ENCODE measurements at regions of chr19 and their contacts with region 1.

Region 1: DNA sequence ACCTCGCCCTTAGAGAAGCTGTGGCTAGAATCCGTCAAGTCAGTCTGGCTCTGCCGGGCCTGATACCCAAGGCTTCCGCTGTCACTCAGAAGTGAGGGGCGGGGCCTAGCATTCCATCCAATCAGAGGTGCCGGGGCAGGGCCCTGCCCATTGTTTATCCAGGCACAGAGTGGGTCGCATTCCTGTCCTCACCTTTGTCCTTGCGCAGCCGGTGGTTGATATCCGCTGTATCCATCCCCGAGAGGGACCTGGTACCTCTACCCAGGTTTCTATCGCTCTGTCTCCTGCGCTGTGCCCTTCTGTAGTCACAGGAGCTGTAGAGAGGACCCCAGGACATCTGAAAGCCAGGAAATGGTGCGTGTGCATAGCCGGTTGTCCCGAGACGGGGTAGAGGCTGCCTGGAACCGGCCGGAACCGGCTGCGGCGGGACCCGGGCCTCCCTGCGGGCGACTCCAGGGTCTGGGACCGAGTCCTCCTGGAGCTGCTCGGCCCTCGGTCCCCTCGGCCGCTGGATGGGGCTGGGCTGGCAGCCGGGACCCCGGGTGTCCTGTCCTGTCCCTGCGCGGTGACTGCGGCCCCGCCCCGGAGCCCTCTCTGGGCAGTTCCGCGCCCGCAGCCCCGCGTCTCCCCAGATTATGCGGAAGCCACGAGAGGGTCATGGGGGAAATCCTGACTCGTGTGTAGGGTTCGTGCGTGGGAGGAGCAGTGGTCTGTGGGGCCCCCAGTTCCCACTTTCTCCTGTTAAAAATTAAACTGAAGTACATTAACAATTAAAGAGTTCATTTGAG is at the start of gene ZNF763:
- DNase-seq: peak; percentile 70 to 86 (median 83)
- ATAC-seq: peak; percentile 95
- H3K4me3 ChIP-seq: peak within 1 kb of the TSS; percentile 90
- H3K4me3 Mint-ChIP-seq: peak within 1 kb of the TSS; percentile 87 to 99 (median 94)
- H3K27ac ChIP-seq: peak within 1 kb of the TSS; percentile 88
- H3K27ac Mint-ChIP-seq: peak within 1 kb of the TSS; percentile 89 to 97 (median 94)
- H3K4me1 ChIP-seq: peaks cover 8 to 10% of the 10 kb centered on the region in 2 donors
- H3K4me1 Mint-ChIP-seq: peaks cover 21 to 34% (median 27%) of the 10 kb centered on the region in 7 donors
- H3K27me3 ChIP-seq: no peaks in the 10 kb centered on the region
- H3K27me3 Mint-ChIP-seq: no peaks in the 10 kb centered on the region
- total RNA-seq, gene ZNF763: 1.3 to 17.3 (median 4.4) TPM

Region 2: DNA sequence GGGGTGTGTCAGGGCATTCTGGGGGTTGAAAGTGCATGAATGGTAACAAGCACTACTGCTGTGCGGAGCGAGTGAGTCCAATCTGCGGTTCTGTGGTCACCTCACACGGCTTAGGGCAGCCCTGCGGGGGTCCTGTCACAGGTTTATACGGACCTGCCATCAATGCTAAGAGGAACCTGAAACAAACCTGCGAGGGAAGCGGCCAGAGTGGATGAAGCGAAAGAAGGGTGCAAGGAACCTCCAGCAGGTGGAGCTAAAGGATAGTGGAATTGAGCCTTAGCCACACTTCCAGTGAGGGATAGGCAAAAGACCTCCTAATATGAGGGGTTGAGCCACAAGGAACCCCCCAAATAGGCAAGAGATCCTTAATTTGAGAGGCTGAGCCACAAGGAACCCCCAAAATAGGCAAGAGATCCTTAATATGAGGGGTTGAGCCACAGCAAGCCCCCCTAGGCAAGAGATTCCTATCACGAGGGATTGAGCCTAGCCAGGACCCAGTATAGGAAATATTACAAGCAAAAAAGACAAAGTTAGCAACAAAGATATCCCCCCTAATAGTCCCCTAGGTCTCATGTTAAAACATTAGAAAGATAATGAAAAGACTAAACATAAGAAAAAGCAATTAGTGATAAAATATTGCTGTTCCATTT is 83.8 kb before region 1 on chr19:
- CTCF ChIA-PET with region 1: interaction called, 4 read pairs
- POLR2A ChIA-PET with region 1: interaction called, 5 read pairs
- intact Hi-C with region 1: loop called in 1 of 2 experiments (anchors 2 kb)
- DNase-seq: peak; percentile 20 to 72 (median 59)
- ATAC-seq: peak; percentile 74
- H3K4me3 ChIP-seq: no peak overlapping the region
- H3K4me3 Mint-ChIP-seq: peak overlapping the region in 1 of 10 donors; percentile 31
- H3K27ac ChIP-seq: no peak overlapping the region
- H3K27ac Mint-ChIP-seq: peak overlapping the region in 3 of 9 donors; percentile 3 to 15 (median 12)
- H3K4me1 ChIP-seq: no peaks in the 10 kb centered on the region
- H3K4me1 Mint-ChIP-seq: peaks cover 0 to 7% (median 0%) of the 10 kb centered on the region in 7 donors
- H3K27me3 ChIP-seq: no peaks in the 10 kb centered on the region
- H3K27me3 Mint-ChIP-seq: peaks cover 0 to 3% (median 0%) of the 10 kb centered on the region in 5 donors

Measured in naive thymus-derived CD4-positive, alpha-beta T cell (primary cell).